Common myeloid progenitor, CD34-positive (primary cell): ENCODE measurements at regions of chr7 and their contacts with region 1.

Region 1: DNA sequence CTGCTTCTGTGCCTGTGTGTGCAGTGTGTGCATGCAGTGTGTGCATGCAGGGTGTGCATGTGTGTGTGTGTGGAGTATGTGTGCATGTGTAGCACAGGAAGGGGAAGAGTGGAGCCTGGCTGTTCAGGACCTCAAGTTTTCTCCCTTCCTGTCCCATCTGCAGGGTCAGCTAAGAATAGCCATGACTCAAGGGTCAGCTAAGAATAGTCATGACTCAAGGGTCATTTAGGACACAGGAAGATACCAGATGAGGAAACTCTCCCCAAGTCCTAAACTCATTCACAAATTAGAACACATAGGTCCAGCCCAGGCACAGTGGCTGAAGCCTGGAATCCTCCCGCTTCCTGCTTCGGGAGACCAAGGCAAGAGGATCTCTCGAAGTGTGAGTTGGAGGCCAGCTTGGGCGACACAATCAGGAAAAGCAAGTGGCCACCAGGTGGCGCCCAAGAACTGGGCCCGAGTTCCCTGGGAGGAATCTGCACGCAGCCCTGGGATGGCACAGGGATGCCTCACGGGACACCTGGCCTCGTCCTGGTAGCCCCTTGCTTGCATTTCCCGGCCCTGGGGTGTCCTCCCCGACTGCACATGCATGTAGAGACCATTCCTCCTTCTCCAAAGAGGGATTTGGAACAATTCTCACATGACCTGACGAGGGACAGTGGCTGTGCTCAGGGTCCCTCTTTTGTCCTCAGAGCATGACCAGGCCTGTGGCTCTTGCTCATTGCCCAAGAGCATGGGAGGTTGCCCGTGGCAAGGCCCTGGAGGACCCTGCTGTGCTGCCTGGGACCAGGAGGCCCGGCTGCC is 21.4 kb upstream of the VOPP1 start:
- DNase-seq: peak in 2 of 3 donors; percentile 46 to 59
- H3K4me3 ChIP-seq: no peak overlapping the region
- H3K27ac ChIP-seq: no peak overlapping the region
- H3K4me1 ChIP-seq: no peaks in the 10 kb centered on the region
- H3K27me3 ChIP-seq: no peaks in the 10 kb centered on the region

Region 2: DNA sequence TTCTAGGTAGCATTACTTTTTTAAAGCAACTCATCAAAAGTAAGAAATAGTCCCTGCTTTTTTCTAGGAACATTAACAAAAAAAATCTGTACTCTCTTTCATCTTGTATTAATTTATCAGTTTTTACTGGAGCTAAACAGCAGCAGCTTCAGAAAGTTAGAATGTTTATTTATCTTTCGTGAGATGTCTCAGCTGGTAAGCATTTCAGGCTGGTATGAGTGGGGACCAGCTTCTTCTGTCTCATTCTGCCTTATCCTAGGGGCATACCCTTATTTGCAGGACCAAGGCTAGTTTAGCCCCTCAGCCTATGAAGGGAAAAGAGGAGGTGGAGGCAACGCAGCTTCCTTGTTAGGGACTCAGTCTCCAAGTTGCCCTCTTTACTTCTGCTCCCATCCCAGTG is 193.5 kb before region 1 on chr7:
- CTCF ChIA-PET with region 1: no interaction called
- POLR2A ChIA-PET with region 1: no interaction called
- DNase-seq: no peak
- H3K4me3 ChIP-seq: no peak overlapping the region
- H3K27ac ChIP-seq: no peak overlapping the region
- H3K4me1 ChIP-seq: no peaks in the 10 kb centered on the region
- H3K27me3 ChIP-seq: no peaks in the 10 kb centered on the region

Region 3: GRCh38 chr7:55432939-55433784 is 160.6 kb before region 1 on chr7:
- CTCF ChIA-PET with region 1: interaction called, 15 read pairs
- POLR2A ChIA-PET with region 1: no interaction called
- DNase-seq: peak; percentile 31 to 49 (median 48)
- H3K4me3 ChIP-seq: no peak overlapping the region
- H3K27ac ChIP-seq: no peak overlapping the region
- H3K4me1 ChIP-seq: peaks cover 0 to 2% (median 0%) of the 10 kb centered on the region in 4 experiments
- H3K27me3 ChIP-seq: no peaks in the 10 kb centered on the region

Region 4: DNA sequence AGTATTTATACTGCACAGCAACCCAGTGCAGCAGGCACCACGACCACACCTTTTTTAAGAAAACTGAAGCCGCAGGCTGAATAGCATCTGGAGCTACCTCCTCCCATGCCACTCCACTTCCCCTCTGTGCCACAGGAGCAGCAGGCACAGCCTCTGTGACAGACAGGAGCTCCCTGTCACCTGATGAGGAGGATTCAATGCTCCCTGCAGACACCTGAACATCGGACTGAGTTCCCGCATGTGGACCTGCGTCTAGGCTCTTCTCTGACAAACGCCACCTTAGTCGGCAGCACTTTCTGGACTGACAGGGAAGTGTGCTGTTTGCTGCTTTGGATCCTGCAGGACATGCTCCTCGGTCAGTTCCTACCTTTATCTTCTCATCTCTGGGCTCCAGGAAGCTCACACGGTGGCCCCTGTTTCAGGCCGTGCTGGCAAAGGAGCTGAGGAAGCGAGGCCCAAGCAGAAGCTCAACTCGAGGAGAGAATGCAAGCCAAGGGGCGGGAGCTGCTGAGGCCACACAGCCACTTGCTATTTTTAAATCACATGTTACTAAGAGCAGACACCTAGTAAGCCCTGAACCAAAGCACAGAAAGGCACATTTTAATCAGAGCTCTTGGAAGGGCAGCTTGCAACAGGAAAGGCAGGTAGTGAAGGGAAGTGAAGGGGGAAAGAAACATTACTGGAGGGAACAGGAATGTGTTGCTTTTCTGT is 78.0 kb before region 1 on chr7:
- CTCF ChIA-PET with region 1: no interaction called
- POLR2A ChIA-PET with region 1: no interaction called
- DNase-seq: no peak
- H3K4me3 ChIP-seq: no peak overlapping the region
- H3K27ac ChIP-seq: no peak overlapping the region
- H3K4me1 ChIP-seq: peaks cover 0 to 9% (median 1%) of the 10 kb centered on the region in 4 experiments
- H3K27me3 ChIP-seq: no peaks in the 10 kb centered on the region

Region 5: DNA sequence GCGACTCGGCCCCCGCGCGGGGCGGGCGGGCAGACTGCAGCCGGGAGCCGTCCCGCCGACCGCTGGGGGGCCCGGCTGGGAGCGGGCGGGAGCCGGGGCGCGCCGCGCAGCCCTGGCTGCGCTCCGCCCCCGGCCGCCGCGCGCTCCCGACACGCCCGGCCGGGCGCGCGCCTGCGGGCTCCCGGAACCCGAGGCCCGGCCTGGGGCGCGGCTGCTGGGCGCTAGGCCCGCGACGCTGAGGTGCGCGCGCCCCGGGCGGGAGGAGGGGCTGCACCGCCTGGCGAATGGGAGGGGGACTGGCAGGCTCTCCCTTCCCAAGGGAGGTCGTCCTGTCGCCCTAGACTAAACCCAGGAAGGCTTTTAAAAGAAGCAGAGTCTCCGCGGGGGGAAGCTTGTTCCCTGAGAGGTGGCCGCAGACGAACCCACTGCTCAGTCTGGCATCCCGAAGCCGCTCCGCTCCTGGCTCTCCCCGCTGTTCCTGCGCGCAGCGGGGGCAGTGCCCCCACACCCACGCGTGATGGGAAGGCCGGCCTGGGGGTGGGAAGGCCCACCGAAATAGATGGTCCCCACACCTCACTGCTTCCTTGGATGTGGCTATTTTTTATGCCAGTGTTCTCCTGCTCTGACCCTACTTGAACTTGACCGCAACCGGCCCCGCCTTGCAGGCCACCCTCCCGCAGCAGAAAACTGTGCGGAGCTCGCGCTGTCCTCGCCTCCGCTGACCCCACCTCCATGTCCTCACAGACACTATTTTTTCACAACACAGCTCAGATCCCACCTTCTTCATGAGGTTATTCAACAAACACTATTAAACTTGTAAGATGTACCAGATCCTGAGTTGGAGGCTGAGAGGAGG is 21.1 kb before region 1 on chr7 and contains the start of gene VOPP1:
- CTCF ChIA-PET with region 1: interaction called, 18 read pairs
- POLR2A ChIA-PET with region 1: no interaction called
- DNase-seq: peak; percentile 51 to 79 (median 69)
- H3K4me3 ChIP-seq: peak within 1 kb of the TSS; percentile 67 to 86 (median 79)
- H3K27ac ChIP-seq: peak within 1 kb of the TSS in 1 of 2 experiments; percentile 65
- H3K4me1 ChIP-seq: peaks cover 19 to 46% (median 43%) of the 10 kb centered on the region in 4 experiments
- H3K27me3 ChIP-seq: no peaks in the 10 kb centered on the region

Region 6: GRCh38 chr7:55618913-55619312 is 25.2 kb after region 1 on chr7:
- CTCF ChIA-PET with region 1: no interaction called
- POLR2A ChIA-PET with region 1: no interaction called
- DNase-seq: no peak
- H3K4me3 ChIP-seq: no peak overlapping the region
- H3K27ac ChIP-seq: no peak overlapping the region
- H3K4me1 ChIP-seq: no peaks in the 10 kb centered on the region
- H3K27me3 ChIP-seq: peaks cover 0 to 8% (median 2%) of the 10 kb centered on the region in 5 experiments

Region 7: DNA sequence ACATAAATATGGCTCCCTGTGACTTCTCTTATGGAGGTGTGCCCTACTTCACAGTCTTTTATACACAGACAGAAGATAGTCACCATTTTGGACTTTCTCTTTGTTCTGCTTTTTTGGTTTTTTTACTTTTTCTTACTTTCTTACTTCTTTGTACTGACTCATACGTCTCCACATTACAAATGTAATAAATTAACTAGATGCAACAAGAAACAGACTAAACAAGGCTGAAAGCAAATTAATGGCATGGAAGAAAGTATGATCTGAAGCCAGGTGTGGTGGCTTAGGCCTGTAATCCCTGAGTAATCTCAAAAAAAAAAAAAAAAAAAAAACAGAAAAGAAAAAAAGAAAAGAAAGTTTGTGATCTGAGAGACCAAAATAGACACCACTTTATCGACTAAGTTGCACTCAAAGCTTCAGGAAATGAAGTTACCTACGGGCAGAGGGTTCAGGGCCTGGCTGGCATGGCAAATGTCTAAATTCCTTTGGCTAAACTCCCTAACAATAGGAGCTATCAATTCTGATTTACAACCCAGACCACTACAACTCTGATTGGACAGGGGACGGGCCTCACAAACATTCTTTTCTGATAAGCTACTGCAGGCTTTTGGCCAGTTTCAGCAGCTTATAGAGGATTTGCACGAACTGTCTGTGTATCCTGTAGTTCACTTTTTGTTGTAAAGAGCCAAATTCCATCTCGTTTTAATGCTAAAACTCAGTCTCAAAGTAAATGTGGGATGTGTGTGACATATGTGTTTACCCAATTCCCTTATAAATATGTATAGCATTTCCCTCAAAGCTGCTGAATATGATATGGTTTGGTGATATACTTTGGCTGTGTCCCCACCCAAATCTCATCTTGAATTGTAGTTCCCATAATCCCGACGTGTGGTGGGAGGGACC is 139.8 kb after region 1 on chr7:
- CTCF ChIA-PET with region 1: no interaction called
- POLR2A ChIA-PET with region 1: no interaction called
- DNase-seq: no peak
- H3K4me3 ChIP-seq: no peak overlapping the region
- H3K27ac ChIP-seq: no peak overlapping the region
- H3K4me1 ChIP-seq: peaks cover 0 to 4% (median 0%) of the 10 kb centered on the region in 4 experiments
- H3K27me3 ChIP-seq: no peaks in the 10 kb centered on the region